ENCODE measurements at regions of chr13 and their contacts with region 1.

Region 1: DNA sequence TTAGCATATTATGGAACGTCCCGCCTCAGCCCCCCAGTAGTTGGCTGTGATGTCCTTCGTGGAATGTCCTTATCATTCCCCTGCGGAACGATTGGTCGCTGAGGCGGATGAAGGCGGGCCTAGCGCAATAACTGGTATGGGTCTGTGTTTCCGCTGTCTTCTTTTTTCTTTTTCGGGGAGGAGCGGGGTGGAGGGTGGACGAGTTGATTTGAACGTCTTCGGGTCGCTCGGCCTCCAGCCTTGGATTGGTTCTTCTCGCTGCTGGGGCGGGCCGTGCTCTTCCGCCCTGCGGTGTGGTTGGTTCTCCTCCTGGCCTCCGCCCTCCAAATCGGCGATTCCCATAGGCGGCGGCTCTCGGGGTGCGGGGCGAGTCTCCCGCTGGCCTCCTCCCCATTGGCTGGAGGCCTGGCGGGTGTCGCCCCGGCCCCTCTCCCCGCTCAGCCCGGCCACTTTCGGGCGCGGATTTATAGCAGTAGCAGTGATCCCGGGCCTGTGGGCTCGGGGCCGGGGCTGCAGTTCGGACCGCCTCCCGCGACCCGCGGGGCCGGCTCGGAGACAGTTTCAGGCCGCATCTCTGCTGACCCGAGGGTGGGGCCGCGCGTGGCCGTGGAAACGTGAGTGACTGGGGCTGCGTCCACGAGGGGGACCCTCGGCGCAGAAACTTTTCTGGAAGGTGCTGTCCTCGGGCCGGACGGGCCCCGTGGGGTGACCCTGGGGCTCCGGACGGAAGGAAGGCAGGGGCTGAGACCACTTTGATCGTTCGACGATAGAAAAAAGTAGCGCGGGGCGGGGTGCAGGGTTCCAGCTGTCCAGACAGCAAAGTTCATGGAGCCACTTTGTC is 2.1 kb downstream of the ING1 start:
- DNase-seq: peak; percentile 88
- ATAC-seq: peak; percentile 62
- H3K4me3 Mint-ChIP-seq: peak overlapping the region; percentile 96
- H3K27ac Mint-ChIP-seq: peak overlapping the region; percentile 97
- H3K4me1 Mint-ChIP-seq: peaks cover 39% of the 10 kb centered on the region
- H3K27me3 Mint-ChIP-seq: no peaks in the 10 kb centered on the region
- CTCF ChIP-seq: no peak

Region 2: DNA sequence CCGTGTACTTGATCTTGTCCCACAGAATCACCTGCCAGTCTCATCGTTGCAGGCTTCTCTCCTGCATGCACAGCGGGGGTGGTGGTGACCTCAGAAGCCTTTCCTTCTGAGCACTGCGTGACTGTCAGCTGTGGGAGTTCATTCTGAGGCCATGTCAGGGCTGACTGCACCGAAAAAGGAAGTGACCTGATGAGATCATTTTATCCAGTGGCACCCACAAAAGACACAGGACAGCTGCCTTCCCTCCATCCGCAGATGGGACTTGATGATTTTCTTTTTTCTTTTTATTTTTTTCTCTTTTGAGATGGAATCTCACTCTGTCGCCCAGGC is 243.8 kb before region 1 on chr13:
- CTCF ChIA-PET with region 1: no interaction called
- POLR2A ChIA-PET with region 1: interaction called, 4 read pairs
- intact Hi-C with region 1: loop called (anchors 1 kb)
- DNase-seq: peak; percentile 59
- ATAC-seq: peak; percentile 93
- H3K4me3 Mint-ChIP-seq: peak overlapping the region; percentile 73
- H3K27ac Mint-ChIP-seq: peak overlapping the region; percentile 83
- H3K4me1 Mint-ChIP-seq: peaks cover 55% of the 10 kb centered on the region
- H3K27me3 Mint-ChIP-seq: no peaks in the 10 kb centered on the region
- CTCF ChIP-seq: no peak

Region 3: GRCh38 chr13:110644892-110645521 is 70.6 kb before region 1 on chr13:
- CTCF ChIA-PET with region 1: interaction called, 16 read pairs
- POLR2A ChIA-PET with region 1: interaction called, 28 read pairs
- intact Hi-C with region 1: loop called (anchors 2 kb)
- DNase-seq: peak; percentile 42
- ATAC-seq: peak; percentile 92
- H3K4me3 Mint-ChIP-seq: no peak overlapping the region
- H3K27ac Mint-ChIP-seq: no peak overlapping the region
- H3K4me1 Mint-ChIP-seq: peaks cover 31% of the 10 kb centered on the region
- H3K27me3 Mint-ChIP-seq: no peaks in the 10 kb centered on the region
- CTCF ChIP-seq: no peak

Region 4: DNA sequence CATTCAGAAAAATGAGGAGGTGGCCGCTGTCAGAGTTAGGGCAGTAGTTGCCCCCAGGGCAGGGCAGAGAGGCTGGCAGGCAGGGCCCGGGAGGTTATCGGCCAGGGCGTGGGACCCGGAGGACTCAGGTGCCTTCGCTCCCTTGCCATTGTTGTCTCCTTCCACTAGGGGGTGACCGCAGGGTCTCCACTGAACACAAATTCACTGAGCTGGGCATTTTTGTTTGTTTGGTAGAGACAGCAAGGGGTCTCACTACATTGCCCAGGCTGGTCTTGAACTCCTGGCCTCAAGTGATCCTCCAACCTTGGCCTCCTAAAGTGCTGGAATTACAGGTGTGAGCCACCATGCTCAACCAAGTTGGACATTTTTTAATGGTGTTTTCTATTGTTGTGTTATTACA is 34.8 kb before region 1 on chr13:
- CTCF ChIA-PET with region 1: interaction called, 7 read pairs
- POLR2A ChIA-PET with region 1: interaction called, 169 read pairs
- intact Hi-C with region 1: loop called (anchors 1 kb)
- DNase-seq: no peak
- ATAC-seq: no peak
- H3K4me3 Mint-ChIP-seq: no peak overlapping the region
- H3K27ac Mint-ChIP-seq: peak overlapping the region; percentile 35
- H3K4me1 Mint-ChIP-seq: peaks cover 37% of the 10 kb centered on the region
- H3K27me3 Mint-ChIP-seq: no peaks in the 10 kb centered on the region
- CTCF ChIP-seq: no peak

Region 5: DNA sequence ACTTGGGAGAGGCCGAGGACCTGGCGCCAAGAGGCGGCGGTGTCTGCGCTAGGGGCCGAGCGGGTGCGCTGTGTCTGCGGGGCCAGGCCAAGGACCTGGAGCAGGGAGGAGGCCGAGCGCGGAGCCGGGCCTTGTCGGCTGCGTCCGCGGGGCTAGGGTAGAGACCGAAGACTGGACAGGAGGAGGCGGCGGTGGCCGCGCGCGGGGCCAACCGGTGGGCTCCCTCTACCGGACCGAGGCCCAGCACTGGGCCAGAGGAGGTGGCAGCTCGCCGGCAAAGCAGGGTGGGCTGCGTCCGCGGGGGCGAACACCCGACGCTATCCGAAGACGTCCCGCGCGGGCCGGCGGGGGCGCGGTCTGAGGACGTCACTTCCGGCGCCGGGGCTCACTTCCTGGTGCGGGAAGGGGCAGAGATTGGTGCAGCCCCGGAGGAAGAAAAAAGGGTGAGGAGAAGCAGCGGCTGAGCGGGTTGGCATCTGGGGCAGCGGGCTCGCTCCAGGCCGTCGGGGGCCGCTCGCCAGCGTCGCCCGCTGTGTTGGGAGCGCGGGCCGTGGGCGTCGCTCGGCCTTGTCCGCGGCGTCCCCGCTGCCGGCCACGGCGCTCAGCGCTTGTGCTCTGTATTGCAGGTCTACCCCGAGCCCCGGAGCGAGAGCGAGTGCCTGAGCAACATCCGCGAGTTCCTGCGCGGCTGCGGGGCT is 437.8 kb after region 1 on chr13:
- CTCF ChIA-PET with region 1: no interaction called
- POLR2A ChIA-PET with region 1: no interaction called
- intact Hi-C with region 1: loop called (anchors 1 kb)
- DNase-seq: peak; percentile 98
- ATAC-seq: peak; percentile 85
- H3K4me3 Mint-ChIP-seq: peak overlapping the region; percentile 92
- H3K27ac Mint-ChIP-seq: peak overlapping the region; percentile 88
- H3K4me1 Mint-ChIP-seq: peaks cover 30% of the 10 kb centered on the region
- H3K27me3 Mint-ChIP-seq: no peaks in the 10 kb centered on the region
- CTCF ChIP-seq: no peak